ENCODE measurements at regions of chr10 and their contacts with region 1.

Region 1: DNA sequence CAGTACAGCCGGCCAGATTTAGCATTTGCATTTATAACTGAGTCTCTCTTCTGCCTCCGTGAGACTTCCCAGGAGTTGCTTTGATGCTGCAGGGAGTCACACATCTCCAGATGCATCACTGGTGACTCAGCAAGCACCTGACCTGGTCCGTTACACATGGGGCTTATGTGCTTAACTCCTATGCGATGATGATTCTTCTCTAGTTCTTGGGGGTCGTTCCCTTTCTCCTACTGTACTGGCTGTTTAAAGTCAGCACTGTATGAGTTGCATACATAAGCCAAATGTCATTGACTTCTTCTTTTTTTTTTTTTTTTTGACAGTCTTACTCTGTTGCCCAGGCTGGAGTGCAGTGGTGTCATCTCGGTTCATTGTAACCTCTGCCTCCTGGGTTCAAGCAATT is 13.0 kb upstream of the AKR1E2 start:
- DNase-seq: no peak
- CTCF ChIP-seq: no peak

Region 2: GRCh38 chr10:4450956-4451908 is 361.8 kb before region 1 on chr10:
- CTCF ChIA-PET with region 1: no interaction called
- POLR2A ChIA-PET with region 1: no interaction called
- DNase-seq: no peak
- CTCF ChIP-seq: no peak

Region 3: DNA sequence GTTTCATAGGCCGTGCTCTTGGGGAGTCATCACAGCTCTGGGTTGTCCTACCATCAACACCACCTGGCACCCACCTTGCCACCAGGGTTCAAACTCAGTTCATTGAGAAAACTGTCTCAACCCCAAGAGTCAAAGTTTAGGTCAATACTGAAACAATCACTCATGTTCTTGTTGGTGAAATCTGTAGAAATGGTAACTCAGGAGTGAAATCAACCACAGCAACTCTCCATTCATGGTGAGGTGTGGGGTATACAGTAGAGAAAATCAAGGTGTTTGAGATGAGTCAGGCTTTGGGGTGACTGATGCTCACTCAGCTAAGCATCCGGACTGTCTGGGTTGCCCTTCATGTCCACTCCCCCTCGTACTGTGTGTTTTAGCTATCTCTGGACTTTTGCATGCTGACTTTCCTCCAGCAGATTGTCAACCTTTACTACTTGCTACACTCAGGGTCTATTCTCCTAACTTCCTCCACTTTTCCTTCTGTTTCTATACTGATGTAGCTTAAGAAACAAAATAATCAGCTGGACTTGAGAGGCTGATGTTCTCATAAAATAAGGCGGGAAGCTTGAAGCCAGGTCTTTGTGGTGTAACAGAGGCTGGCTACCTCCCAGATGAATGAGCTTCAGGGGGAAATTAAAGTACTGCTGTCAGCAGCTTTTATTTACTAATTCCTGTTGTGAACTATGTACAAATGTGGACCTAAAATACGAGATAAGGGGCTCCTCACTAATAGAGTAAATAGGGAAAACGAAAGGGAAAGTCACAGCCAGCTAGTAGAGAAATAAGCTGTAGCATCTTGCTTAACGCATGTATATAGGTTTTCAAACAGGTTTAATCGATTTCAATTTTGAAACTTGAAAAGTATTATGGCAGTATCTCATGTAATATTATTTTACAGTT is 160.7 kb before region 1 on chr10:
- CTCF ChIA-PET with region 1: no interaction called
- POLR2A ChIA-PET with region 1: no interaction called
- DNase-seq: no peak
- CTCF ChIP-seq: no peak

Region 4: DNA sequence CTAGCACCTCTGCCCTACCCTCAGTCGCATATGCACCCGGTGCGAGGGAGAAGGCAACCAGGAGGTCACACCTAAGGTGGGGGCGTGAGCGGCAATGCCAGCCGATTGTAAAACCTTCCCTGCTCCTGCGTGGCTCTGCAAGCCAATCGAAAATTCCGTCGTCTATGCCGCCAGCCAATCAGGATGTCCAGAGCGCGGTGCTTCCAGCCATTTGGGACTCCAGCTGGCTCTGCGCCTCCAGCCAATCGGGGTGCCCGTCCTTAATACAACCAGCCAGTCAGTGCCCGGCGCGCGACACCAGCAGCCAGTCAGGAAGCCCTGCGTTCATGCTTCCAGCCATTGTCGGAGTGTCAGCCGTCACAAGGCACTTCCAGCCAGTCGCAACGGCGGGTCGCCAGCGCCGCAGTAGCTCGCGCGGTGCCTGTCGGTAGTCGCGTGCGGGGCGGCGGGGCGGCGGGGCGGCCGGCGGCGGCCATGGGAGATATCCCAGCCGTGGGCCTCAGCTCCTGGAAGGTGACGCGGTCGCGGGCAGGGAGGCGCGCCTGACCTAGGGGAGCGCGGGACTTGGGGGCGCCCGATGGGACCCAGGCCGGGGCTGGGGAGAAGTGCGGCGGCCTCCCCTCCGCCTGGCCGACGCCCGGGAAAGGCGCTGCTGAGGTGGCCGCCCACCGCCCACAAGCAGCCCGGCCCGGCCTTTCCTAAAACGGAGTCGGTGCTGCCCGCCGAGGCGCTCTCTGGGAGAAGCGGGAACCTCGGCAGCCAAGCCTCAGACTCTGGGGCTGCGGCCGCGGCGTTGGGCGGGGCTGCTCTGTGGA is 13.0 kb after region 1 on chr10 and contains the start of gene AKR1E2:
- CTCF ChIA-PET with region 1: interaction called, 35 read pairs
- POLR2A ChIA-PET with region 1: no interaction called
- DNase-seq: peak; percentile 39
- CTCF ChIP-seq: no peak

Region 5: DNA sequence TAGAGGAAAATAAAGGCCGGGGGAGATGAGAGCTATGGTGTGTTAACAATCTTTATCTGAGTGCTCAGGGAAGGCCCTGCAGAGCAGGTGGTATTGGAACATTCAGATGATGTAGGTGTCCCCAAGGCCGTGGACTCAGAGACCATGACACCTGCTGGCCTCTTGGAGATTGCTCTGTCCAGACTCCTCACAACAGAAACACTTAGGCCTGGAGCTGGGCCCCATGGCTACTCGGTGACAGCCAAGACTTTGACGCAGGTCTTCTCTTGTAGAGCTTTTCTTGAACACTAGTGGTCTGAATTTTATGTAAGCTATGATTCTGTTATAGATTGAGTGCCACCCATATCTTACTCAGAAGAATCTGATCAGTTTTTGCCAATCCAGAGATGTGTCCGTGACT is 26.4 kb after region 1 on chr10:
- CTCF ChIA-PET with region 1: interaction called, 35 read pairs
- POLR2A ChIA-PET with region 1: no interaction called
- DNase-seq: no peak
- CTCF ChIP-seq: no peak

Region 6: GRCh38 chr10:4981722-4982471 is 168.9 kb after region 1 on chr10:
- CTCF ChIA-PET with region 1: interaction called, 13 read pairs
- POLR2A ChIA-PET with region 1: no interaction called
- DNase-seq: peak; percentile 20
- CTCF ChIP-seq: peak; percentile 53

Region 7: DNA sequence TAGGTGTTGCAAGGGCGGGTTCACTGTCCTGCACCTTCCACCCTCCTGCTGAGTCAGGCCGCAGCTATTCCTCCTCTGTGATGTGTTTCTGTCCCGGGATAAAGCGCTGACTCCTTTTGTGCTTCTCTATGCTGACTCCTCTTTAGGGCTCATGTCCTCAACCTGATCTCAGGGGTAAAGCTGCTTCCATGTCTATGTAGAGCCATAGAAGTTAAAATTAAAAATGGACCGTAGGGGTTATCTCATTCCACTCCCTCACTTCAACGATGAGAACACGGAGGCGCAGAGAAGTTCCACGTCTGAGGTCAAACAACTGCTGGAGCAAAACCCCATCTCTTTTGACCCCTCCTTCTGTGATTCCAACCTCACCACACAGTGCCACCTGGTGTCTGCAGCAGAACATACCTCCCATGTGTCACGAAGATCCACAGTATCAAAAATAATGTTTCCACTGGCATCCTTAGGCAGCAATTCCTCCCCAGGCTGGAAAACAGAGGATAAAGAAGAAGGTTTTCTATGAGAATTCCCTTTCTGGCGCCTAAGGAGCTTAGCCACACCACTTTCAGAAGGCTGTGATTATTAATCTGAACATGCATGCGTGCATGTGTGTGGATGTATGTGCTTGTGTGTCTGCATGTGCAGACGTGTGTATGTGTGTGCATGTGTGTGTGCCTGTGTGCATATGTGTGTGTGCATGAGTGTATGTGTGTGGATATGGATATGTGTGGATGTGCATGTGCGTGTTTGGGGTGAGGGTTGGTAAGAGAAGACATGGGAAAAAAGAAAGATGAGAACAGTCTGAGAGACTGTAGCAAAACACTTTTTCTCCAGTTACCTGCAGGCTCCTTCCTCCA is 470.5 kb after region 1 on chr10:
- CTCF ChIA-PET with region 1: interaction called, 12 read pairs
- POLR2A ChIA-PET with region 1: no interaction called
- DNase-seq: no peak
- CTCF ChIP-seq: peak; percentile 44

Region 8: DNA sequence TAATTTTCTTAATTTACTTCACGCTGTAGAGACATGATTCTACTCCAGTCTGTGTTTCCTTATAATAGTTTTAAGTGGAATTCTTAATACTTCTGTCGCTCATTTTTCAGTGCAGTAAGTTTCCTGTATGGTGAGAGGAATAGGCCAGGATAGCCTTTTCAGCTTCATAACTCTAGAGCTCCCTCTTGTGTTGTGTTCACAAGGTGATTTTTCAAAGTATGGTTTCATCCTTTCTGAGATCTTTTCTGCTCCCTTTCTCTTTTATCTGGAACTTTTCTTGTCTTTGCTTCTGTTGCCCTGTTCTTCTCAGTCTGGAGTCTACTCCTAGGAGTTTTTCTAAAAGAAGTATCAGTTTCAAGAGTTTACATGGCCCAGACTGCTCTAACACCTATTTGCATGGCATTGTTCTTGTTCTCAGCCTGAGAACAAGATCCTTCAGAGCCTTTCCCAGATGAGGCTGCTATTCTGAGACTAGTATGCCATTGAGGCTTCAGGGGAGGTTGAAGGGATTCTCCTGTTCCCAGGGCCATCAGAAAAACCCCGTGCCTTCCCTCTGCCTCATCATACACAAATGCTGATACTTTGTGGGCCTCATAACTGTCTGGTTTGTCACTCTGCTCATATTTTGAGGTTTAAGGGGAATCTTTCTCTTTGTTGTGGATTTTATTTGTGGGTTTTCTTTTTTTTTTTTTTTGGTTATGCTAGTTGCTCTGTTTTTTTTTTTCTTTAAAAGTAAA is 621.2 kb after region 1 on chr10:
- CTCF ChIA-PET with region 1: interaction called, 14 read pairs
- POLR2A ChIA-PET with region 1: no interaction called
- DNase-seq: peak; percentile 31
- CTCF ChIP-seq: peak; percentile 66

Region 9: DNA sequence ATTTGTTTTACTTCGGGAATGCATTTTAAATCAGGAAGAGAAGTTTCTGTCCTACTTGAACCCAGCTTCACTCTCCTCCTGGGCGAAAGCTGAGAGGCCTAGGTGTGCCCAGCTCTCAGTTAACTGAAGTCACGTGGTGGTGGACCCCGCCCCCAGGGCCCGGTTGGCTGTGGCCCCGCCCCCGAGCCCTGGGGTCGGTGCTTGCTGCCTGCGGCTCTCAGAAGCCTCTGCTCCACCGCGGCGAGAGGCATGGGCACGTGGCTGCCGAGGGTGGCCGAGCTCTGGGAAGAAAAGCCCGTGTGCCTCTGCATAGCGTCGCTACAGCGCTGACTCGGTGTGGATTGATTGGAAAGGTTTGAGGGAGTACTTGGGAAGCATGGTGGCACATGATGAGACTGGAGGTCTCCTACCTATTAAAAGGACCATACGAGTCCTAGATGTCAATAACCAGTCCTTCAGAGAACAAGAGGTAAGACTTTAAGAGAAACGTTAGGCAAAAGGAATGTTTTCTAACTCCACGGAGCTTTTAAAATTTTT is 633.4 kb after region 1 on chr10:
- CTCF ChIA-PET with region 1: interaction called, 15 read pairs
- POLR2A ChIA-PET with region 1: no interaction called
- DNase-seq: peak; percentile 58
- CTCF ChIP-seq: no peak